ENCODE measurements at regions of chr1 and their contacts with region 1.

Region 1: DNA sequence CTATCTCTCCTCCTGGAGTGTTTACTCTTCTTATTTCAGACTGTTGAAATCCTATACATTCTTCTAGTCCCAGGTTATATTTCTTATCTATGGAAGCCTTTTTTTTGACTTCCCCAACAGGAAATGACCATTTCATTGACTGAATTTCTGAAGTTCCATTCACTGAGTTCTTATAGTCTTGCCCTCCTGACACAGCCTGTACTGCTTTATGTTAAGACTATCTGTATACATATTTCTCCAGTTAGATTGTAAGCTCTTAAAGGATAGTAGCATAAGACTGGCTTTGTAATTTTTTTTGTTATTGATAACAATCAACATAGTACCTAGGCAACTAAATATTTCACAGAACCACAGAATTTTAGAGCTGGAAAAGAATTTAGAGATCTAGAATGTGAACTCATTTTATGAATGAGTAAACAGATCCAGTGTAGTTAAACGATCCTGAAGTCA is 14.9 kb upstream of the MACF1 start:
- DNase-seq: no peak
- ATAC-seq: no peak
- H3K4me3 ChIP-seq: no peak overlapping the region
- H3K4me3 Mint-ChIP-seq: no peak overlapping the region
- H3K27ac ChIP-seq: no peak overlapping the region
- H3K27ac Mint-ChIP-seq: no peak overlapping the region
- H3K4me1 ChIP-seq: peaks cover 18 to 27% of the 10 kb centered on the region in 2 donors
- H3K4me1 Mint-ChIP-seq: peaks cover 34% of the 10 kb centered on the region
- H3K27me3 ChIP-seq: no peaks in the 10 kb centered on the region
- H3K27me3 Mint-ChIP-seq: no peaks in the 10 kb centered on the region
- CTCF ChIP-seq: no peak

Region 2: GRCh38 chr1:38848071-38848470 is 341.5 kb before region 1 on chr1:
- CTCF ChIA-PET with region 1: no interaction called
- POLR2A ChIA-PET with region 1: no interaction called
- intact Hi-C with region 1: no loop called
- DNase-seq: peak; percentile 57
- ATAC-seq: peak; percentile 72
- H3K4me3 ChIP-seq: no peak overlapping the region
- H3K4me3 Mint-ChIP-seq: peak overlapping the region; percentile 6
- H3K27ac ChIP-seq: peak overlapping the region; percentile 33 to 76
- H3K27ac Mint-ChIP-seq: peak overlapping the region; percentile 69
- H3K4me1 ChIP-seq: peaks cover 16 to 17% of the 10 kb centered on the region in 2 donors
- H3K4me1 Mint-ChIP-seq: peaks cover 17% of the 10 kb centered on the region
- H3K27me3 ChIP-seq: no peaks in the 10 kb centered on the region
- H3K27me3 Mint-ChIP-seq: no peaks in the 10 kb centered on the region
- CTCF ChIP-seq: no peak

Region 3: GRCh38 chr1:38997034-38997900 is 192.3 kb before region 1 on chr1:
- CTCF ChIA-PET with region 1: no interaction called
- POLR2A ChIA-PET with region 1: no interaction called
- intact Hi-C with region 1: no loop called
- DNase-seq: no peak
- ATAC-seq: no peak
- H3K4me3 ChIP-seq: no peak overlapping the region
- H3K4me3 Mint-ChIP-seq: no peak overlapping the region
- H3K27ac ChIP-seq: peak overlapping the region in 1 of 2 donors; percentile 3
- H3K27ac Mint-ChIP-seq: no peak overlapping the region
- H3K4me1 ChIP-seq: peaks cover 11 to 14% of the 10 kb centered on the region in 2 donors
- H3K4me1 Mint-ChIP-seq: peaks cover 29% of the 10 kb centered on the region
- H3K27me3 ChIP-seq: no peaks in the 10 kb centered on the region
- H3K27me3 Mint-ChIP-seq: no peaks in the 10 kb centered on the region
- CTCF ChIP-seq: no peak

Region 4: DNA sequence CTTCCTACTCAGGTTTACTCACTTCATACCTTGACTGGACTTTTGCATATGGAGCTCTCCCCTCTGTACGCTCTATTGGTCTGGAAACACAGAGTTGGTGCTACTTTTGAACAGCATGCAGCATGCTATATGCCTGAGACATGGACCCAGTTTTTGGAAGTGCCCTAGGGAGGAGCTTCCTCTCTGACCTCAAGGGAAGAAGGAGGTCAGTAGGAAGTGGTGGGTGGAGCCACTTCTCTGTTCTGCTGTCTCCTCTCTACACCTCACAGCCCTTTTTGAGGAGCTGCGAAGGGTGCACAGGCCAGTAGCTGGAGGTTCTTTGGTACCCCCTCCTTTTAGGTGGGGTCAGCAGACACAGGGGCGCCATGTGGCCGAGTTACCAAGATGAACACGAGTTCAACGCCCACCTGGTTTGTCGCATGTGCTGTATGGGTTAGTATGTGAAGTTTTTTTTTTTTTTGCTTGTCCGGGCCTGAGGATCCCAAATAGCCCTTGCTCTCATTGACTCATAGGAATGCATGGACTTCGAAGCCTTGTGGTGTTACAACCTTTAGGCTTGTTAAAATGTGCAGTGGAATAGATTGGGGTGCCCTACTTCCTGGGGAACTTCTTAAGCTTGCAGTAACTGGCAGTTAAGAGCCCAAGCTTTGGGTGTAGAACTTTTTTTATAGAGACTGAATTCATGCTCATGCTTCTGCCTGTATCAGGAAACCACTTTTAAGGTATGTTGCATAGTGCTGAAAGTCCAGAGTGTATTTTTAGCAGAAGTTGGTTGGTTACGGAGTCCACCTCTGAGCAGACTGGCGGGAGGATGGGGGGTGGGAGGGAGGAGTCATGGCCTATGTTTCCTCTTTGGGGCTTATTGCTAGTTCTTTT is 25.6 kb after region 1 on chr1:
- CTCF ChIA-PET with region 1: interaction called, 101 read pairs
- POLR2A ChIA-PET with region 1: interaction called, 6 read pairs
- intact Hi-C with region 1: no loop called
- DNase-seq: peak; percentile 77
- ATAC-seq: peak; percentile 81
- H3K4me3 ChIP-seq: peak overlapping the region; percentile 45 to 79 (median 61)
- H3K4me3 Mint-ChIP-seq: peak overlapping the region; percentile 89
- H3K27ac ChIP-seq: peak overlapping the region; percentile 70 to 92
- H3K27ac Mint-ChIP-seq: peak overlapping the region; percentile 91
- H3K4me1 ChIP-seq: peaks cover 36 to 44% of the 10 kb centered on the region in 2 donors
- H3K4me1 Mint-ChIP-seq: peaks cover 49% of the 10 kb centered on the region
- H3K27me3 ChIP-seq: no peaks in the 10 kb centered on the region
- H3K27me3 Mint-ChIP-seq: no peaks in the 10 kb centered on the region
- CTCF ChIP-seq: no peak

Region 5: DNA sequence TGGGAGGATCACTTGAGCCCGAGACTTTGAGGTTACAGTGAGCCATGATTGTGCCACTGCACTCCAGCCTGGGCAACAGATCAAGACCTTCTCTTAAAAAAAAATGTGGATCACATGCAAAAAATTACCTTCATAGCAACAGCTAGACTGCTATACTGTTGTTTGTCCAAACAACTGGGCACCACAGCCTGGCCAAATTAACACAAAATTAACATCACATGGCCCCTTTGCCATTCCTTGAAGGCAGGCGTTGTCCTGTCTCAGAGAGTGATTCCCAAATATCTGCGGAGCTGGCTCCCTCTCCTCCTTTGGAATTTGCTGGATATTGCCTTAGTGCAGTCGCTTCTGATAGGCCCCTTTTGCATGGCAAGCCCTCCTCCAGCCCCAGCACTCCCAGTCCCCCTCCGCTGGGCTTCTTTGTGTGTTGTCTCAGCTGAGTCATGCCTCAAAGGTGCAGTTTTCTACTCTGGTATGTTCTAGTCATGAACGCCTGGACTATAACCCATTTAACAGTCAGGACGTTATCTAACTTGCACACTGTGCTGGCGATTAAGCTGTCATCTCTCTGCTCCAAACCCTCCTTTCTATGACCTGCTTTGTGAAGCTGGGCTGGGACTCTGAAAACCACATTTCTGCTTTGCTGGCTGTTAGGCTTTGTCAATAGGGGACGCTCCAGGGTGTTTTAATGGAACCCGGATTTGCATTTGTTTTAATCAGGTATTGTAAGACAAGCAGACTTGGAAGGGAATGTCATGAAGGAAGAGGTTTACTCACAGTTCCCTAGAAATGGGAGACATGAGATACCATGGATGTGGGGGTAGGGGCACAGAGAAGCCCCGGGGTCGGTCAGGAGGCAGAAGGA is 521.7 kb after region 1 on chr1:
- CTCF ChIA-PET with region 1: no interaction called
- POLR2A ChIA-PET with region 1: no interaction called
- intact Hi-C with region 1: no loop called
- DNase-seq: no peak
- ATAC-seq: no peak
- H3K4me3 ChIP-seq: no peak overlapping the region
- H3K4me3 Mint-ChIP-seq: no peak overlapping the region
- H3K27ac ChIP-seq: no peak overlapping the region
- H3K27ac Mint-ChIP-seq: no peak overlapping the region
- H3K4me1 ChIP-seq: no peaks in the 10 kb centered on the region
- H3K4me1 Mint-ChIP-seq: no peaks in the 10 kb centered on the region
- H3K27me3 ChIP-seq: peaks cover 0 to 9% (median 1%) of the 10 kb centered on the region in 4 experiments
- H3K27me3 Mint-ChIP-seq: peaks cover 34% of the 10 kb centered on the region
- CTCF ChIP-seq: no peak